Prostate gland (tissue), 2 donors: ENCODE measurements at regions of chr2 and their contacts with region 1.

Region 1: DNA sequence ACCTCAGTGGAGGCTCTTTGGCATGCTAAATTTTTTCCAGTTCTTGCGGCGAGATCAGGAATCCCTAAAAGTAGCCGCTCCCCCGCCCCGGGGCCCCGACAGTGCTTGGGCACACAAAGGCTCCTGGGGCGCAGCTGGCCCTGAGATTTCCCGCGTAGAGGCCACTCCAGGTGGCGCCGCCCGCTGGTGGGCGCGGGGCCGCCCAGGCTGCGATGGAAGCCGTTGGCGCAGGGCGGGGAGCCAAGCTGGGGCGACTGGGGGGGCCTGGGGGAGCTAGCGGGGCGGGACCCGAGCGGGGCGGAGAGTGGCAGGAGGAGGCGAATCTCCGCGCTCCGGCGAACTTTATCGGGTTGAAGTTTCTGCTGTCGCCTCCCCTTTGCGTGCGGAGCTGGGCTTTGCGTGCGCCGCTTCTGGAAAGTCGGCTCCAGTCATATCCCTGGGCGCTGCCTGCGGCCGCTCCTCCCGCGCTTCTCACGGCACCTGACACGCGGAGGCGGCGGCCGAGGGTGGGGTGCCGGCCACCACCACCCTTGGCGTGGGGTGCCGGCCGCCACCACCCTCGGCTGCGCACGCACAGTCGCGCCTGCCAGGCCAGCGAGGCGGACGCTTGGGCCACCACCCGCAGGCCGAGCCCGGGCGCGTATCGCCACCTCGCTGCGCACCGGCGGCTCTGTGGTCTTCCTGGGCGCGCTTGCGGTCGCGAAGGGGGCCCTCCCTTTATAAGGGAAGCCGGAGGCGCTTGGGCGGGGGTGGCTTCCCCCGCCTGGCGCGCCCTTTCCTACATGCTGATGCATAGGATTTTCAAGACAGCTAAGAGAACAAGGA is 867 bp upstream of the CYP1B1 start:
- DNase-seq: peak; percentile 56
- H3K4me3 ChIP-seq: peak overlapping the region; percentile 53 to 57
- H3K27ac ChIP-seq: peak overlapping the region; percentile 85 to 87
- H3K4me1 ChIP-seq: peaks cover 3% of the 10 kb centered on the region
- H3K27me3 ChIP-seq: no peaks in the 10 kb centered on the region
- CTCF ChIP-seq: peak in 3 of 4 experiments; percentile 11 to 38 (median 36)
- POLR2A ChIP-seq: peak; percentile 8

Region 2: GRCh38 chr2:37982147-37982582 is 94.7 kb before region 1 on chr2:
- intact Hi-C with region 1: loop called (anchors 5 kb)
- DNase-seq: peak; percentile 60
- H3K4me3 ChIP-seq: no peak overlapping the region
- H3K27ac ChIP-seq: no peak overlapping the region
- H3K4me1 ChIP-seq: no peaks in the 10 kb centered on the region
- H3K27me3 ChIP-seq: no peaks in the 10 kb centered on the region
- CTCF ChIP-seq: peak; percentile 78 to 90 (median 82)
- POLR2A ChIP-seq: no peak

Region 3: GRCh38 chr2:38037757-38038621 is 38.8 kb before region 1 on chr2:
- intact Hi-C with region 1: loop called (anchors 5 kb)
- DNase-seq: peak; percentile 14
- H3K4me3 ChIP-seq: peak overlapping the region in 1 of 2 donors; percentile 8
- H3K27ac ChIP-seq: peak overlapping the region; percentile 61 to 65
- H3K4me1 ChIP-seq: no peaks in the 10 kb centered on the region
- H3K27me3 ChIP-seq: no peaks in the 10 kb centered on the region
- CTCF ChIP-seq: peak in 3 of 4 experiments; percentile 13 to 33 (median 23)
- POLR2A ChIP-seq: no peak

Region 4: DNA sequence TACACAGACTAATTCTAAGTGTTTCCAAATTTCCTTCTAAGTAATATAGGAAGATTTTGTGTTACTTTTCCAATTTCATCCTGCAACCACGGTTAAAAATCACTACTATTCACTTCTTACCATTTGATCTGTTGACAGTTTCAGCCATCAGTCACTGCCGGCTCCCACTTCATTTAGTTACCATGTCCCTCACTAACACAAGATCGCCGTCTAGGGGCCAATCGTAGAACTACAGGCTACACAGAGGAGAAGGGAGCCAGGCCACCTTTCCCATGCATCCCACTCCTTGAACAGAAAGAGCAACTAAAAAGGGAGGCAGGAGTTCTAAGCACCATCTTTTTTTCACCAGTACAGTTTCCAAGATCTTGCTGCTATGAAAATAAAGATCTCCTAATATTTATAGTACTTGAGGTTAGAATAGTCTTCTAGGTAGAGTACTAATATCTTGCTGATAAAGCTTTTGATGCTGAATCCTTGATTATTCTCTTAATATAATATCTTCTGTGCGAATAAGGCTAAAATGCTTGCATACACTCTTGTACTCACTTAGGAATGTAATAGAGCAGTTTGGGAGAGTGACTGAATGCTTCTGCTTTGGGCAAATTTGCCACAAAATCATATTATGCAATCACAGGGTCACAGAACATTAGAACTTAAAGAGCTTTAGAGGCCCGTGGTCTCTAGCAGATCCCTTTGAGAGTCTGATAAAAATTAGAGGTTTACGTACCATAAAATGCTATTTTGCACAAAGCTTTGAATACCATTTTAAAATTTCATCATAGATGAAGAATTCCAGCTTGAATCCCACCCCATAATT is 38.6 kb after region 1 on chr2:
- intact Hi-C with region 1: no loop called
- DNase-seq: peak; percentile 74
- H3K4me3 ChIP-seq: no peak overlapping the region
- H3K27ac ChIP-seq: no peak overlapping the region
- H3K4me1 ChIP-seq: no peaks in the 10 kb centered on the region
- H3K27me3 ChIP-seq: no peaks in the 10 kb centered on the region
- CTCF ChIP-seq: peak; percentile 60 to 87 (median 66)
- POLR2A ChIP-seq: no peak

Region 5: DNA sequence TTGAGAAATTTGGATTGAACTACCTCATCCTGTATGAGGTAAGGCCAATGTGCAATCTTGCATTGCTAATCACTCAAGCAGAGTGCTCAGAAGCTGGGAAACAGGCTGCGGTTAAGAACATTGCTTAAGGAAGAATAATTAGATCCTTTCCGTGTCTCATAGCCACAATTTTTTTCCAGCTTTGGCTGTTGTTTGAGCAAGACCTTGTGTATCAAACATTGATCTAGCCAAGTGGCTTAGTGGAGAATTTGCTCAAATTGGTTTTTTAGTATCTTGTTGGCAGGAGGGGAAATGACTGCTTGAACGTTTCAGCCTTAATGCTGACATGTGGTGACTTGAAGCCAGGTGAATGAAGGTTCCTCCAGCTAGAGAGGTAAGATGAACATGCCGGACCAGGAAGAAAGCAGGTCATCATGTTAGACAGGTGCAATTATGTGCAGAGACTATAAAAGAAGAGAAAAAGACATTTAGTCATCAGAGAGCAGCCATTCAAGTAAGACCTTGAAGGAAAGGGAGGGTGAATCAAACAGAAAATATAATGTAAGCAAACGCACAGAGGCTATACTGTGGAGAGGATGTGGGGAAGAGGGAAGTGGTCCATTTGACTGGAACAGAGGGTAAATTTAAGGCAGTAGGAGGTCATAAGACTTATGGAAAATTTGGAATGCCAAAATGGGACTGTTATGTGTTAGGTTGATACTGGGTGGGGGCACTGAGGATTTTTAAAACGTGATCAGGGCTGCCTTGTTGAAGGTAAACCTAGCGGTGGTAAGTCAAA is 98.0 kb after region 1 on chr2:
- intact Hi-C with region 1: loop called (anchors 5 kb)
- DNase-seq: peak; percentile 57
- H3K4me3 ChIP-seq: no peak overlapping the region
- H3K27ac ChIP-seq: no peak overlapping the region
- H3K4me1 ChIP-seq: no peaks in the 10 kb centered on the region
- H3K27me3 ChIP-seq: no peaks in the 10 kb centered on the region
- CTCF ChIP-seq: no peak
- POLR2A ChIP-seq: no peak

Region 6: GRCh38 chr2:38274286-38275276 is 197.8 kb after region 1 on chr2:
- intact Hi-C with region 1: loop called (anchors 2 kb)
- DNase-seq: peak; percentile 68
- H3K4me3 ChIP-seq: no peak overlapping the region
- H3K27ac ChIP-seq: no peak overlapping the region
- H3K4me1 ChIP-seq: no peaks in the 10 kb centered on the region
- H3K27me3 ChIP-seq: no peaks in the 10 kb centered on the region
- CTCF ChIP-seq: peak; percentile 48 to 90 (median 78)
- POLR2A ChIP-seq: no peak